ENCODE measurements at regions of chr12 and their contacts with region 1.

Region 1: GRCh38 chr12:117533704-117534103 is 172.3 kb upstream of the NOS1 start:
- DNase-seq: no peak
- H3K4me3 ChIP-seq: no peak overlapping the region
- H3K27ac ChIP-seq: no peak overlapping the region
- H3K4me1 ChIP-seq: no peaks in the 10 kb centered on the region
- H3K27me3 ChIP-seq: no peaks in the 10 kb centered on the region
- CTCF ChIP-seq: no peak

Region 2: GRCh38 chr12:117472983-117473382 is 60.7 kb before region 1 on chr12:
- CTCF ChIA-PET with region 1: no interaction called
- dilution Hi-C with region 1: loop called (anchors 5 kb)
- in situ Hi-C with region 1: no loop called
- intact Hi-C with region 1: no loop called
- DNase-seq: no peak
- H3K4me3 ChIP-seq: no peak overlapping the region
- H3K27ac ChIP-seq: no peak overlapping the region
- H3K4me1 ChIP-seq: no peaks in the 10 kb centered on the region
- H3K27me3 ChIP-seq: no peaks in the 10 kb centered on the region
- CTCF ChIP-seq: no peak

Region 3: GRCh38 chr12:117759076-117759475 is 225.4 kb after region 1 on chr12:
- CTCF ChIA-PET with region 1: no interaction called
- dilution Hi-C with region 1: loop called (anchors 5 kb)
- in situ Hi-C with region 1: no loop called
- intact Hi-C with region 1: no loop called
- DNase-seq: no peak
- H3K4me3 ChIP-seq: no peak overlapping the region
- H3K27ac ChIP-seq: no peak overlapping the region
- H3K4me1 ChIP-seq: no peaks in the 10 kb centered on the region
- H3K27me3 ChIP-seq: no peaks in the 10 kb centered on the region
- CTCF ChIP-seq: no peak